MCF 10A (cell line): ENCODE measurements at regions of chr4 and their contacts with region 1.

Region 1: DNA sequence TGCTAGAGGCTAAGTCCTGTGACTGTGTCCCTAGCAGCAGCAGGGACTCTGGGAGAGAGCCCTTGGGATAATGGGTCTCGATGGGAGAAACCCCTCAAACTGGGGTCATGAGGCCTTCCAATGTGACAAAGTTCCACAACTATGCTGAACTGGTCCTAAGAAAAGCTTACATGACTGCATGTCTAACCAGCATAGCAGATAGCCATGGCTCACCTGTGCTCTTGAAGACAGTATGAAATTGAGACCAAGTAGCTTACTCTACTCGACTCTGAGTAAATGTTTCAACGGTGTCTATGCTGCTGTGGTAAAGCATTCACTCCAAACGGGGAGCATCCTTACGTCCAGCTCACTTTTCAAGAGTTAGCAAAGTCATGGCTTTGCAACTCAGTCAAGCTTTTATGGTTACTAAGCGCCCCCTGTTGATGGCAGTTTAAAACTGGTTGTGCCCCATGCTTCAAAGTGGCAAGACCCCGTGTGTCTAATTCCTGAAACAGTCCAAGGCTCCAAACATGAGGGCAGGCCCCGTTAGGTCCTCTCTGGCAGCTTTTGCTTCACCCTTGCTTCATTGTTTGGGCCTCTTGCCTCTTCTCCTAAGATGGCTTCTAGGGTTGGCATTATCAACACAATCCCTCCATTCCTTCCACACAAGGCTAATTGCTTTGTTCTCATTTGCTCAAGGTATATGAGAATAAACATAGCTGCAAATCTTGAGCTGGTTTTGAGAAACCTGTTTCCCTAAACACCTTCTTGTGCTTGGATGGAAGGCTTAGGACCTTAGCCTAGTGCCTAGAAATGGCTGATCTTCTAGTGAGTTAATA is 46.6 kb downstream of the CCNG2 start:
- DNase-seq: peak; percentile 85
- H3K4me3 Mint-ChIP-seq: no peak overlapping the region
- H3K27ac Mint-ChIP-seq: no peak overlapping the region
- H3K4me1 Mint-ChIP-seq: peaks cover 25% of the 10 kb centered on the region
- H3K27me3 Mint-ChIP-seq: no peaks in the 10 kb centered on the region
- CTCF ChIP-seq: peak; percentile 87

Region 2: GRCh38 chr4:76758290-76758882 is 445.2 kb before region 1 on chr4:
- CTCF ChIA-PET with region 1: interaction called, 7 read pairs
- POLR2A ChIA-PET with region 1: no interaction called
- intact Hi-C with region 1: loop called (anchors 10 kb)
- DNase-seq: peak; percentile 80
- H3K4me3 Mint-ChIP-seq: no peak overlapping the region
- H3K27ac Mint-ChIP-seq: no peak overlapping the region
- H3K4me1 Mint-ChIP-seq: peaks cover 8% of the 10 kb centered on the region
- H3K27me3 Mint-ChIP-seq: no peaks in the 10 kb centered on the region
- CTCF ChIP-seq: peak; percentile 52

Region 3: DNA sequence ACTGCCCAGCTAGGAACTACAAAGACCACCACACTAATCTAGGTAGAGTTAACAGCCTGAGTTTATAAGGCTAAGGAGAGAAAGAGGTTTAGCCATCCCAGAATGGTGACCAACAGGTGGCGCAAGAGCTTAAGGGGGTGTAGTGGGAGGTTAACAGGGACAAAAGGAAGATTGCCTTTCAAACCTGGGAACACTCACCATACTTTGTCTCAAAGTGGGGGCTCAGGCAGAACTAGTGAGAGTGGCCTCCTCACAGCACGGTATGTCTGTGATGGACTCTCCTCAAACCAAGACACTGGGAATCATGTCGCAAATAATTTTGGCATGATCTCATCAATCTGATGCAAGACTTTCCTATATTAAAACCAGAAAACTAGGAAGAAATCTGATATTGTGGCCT is 151.2 kb before region 1 on chr4:
- CTCF ChIA-PET with region 1: interaction called, 61 read pairs
- POLR2A ChIA-PET with region 1: interaction called, 9 read pairs
- intact Hi-C with region 1: loop called (anchors 1 kb)
- DNase-seq: peak; percentile 75
- H3K4me3 Mint-ChIP-seq: no peak overlapping the region
- H3K27ac Mint-ChIP-seq: peak overlapping the region; percentile 61
- H3K4me1 Mint-ChIP-seq: peaks cover 21% of the 10 kb centered on the region
- H3K27me3 Mint-ChIP-seq: no peaks in the 10 kb centered on the region
- CTCF ChIP-seq: peak; percentile 45

Region 4: DNA sequence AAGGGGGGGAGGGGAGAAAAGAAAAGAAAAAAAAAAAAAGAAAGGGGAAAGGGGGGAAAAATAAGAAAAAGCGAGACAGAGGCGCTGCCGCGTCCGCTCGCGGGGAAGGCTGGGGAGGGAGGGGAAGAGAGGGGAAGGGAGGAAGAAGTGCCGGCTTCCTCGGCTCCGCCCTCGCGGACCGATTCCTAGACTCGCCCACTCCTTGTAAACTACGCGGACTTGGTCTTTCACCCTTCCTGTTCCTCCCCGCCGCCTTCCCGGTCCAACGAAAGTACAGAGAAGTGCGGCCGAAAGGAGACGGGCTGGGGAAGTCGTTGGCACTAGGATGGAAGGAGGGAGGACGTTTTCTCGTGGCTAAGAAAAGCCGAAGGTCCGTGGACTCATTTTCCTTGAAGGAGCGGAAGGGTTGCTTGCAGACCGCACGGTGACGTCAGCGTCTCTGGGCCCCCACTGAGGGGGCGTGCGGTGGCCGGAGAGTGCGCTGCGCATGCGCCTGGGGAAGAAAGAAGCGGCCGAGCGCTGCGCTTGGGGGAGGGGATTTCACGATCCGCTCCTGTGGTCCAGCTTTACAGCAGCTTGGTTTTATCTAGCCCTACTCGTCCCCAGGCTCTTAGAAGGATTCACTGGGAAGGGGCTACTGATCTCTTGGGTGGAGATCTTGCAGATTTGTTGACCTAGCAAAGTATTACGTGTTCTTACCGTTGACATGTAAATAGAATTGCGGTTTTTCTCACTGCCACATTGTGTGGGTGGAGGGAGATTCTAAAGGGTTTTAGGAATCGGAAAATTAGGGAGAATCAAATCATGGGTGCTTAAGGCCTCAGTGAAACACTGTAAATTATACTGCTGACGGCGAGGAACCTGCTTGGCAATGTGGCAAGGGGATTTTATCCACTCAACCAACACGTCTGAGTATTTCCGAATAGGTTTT is 127.5 kb before region 1 on chr4 and contains the start of gene CCNI:
- CTCF ChIA-PET with region 1: interaction called, 16 read pairs
- POLR2A ChIA-PET with region 1: interaction called, 12 read pairs
- intact Hi-C with region 1: no loop called
- DNase-seq: peak; percentile 95
- H3K4me3 Mint-ChIP-seq: no peak within 1 kb of the TSS
- H3K27ac Mint-ChIP-seq: no peak within 1 kb of the TSS
- H3K4me1 Mint-ChIP-seq: peaks cover 13% of the 10 kb centered on the region
- H3K27me3 Mint-ChIP-seq: no peaks in the 10 kb centered on the region
- CTCF ChIP-seq: no peak
- total RNA-seq, gene CCNI: 297 and 368 TPM in 2 replicates

Region 5: DNA sequence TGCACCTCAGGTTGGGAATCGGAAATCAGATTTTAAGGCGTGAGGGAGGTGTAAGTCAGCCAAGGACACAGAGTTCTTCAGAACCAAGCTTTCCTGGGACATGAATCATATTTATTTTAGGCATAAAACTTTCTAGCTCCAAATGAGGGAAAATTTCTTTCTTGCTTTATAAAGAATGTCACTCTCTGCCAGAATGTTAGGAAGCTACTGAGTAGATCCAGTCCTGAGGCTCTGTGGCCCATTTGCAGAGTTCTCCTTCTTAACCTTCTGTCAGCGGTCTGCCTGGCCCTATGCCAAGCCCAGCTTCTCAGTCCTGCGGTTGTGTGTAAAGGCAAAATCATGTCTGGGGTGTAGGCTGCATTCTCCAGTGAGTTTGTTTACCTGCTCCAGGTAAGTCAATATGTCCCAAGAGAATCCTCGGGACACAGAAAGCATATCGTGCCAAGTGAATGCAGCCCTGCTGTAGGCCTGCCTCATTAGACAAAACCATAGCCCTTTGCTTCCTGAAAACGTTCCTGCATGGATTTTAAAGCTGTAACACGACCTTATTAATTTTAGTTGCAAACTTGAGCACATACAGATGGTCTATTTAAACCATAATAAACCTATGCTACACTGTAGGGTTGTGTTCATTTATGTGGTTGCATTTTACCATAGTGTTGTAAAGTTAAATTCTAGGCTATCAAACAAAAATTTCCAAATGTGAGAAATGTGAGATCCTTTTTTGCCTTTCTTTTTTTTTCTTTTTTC is 98.6 kb before region 1 on chr4:
- CTCF ChIA-PET with region 1: interaction called, 16 read pairs
- POLR2A ChIA-PET with region 1: interaction called, 4 read pairs
- intact Hi-C with region 1: no loop called
- DNase-seq: peak; percentile 58
- H3K4me3 Mint-ChIP-seq: peak overlapping the region; percentile 56
- H3K27ac Mint-ChIP-seq: peak overlapping the region; percentile 90
- H3K4me1 Mint-ChIP-seq: peaks cover 14% of the 10 kb centered on the region
- H3K27me3 Mint-ChIP-seq: no peaks in the 10 kb centered on the region
- CTCF ChIP-seq: no peak

Region 6: GRCh38 chr4:77156533-77156911 is 47.1 kb before region 1 on chr4:
- CTCF ChIA-PET with region 1: interaction called, 10 read pairs
- POLR2A ChIA-PET with region 1: interaction called, 33 read pairs
- intact Hi-C with region 1: loop called (anchors 2 kb)
- DNase-seq: peak; percentile 100
- H3K4me3 Mint-ChIP-seq: peak overlapping the region; percentile 94
- H3K27ac Mint-ChIP-seq: peak overlapping the region; percentile 98
- H3K4me1 Mint-ChIP-seq: peaks cover 16% of the 10 kb centered on the region
- H3K27me3 Mint-ChIP-seq: no peaks in the 10 kb centered on the region
- CTCF ChIP-seq: no peak